ENCODE measurements at regions of chr15 and their contacts with region 1.

Region 1: DNA sequence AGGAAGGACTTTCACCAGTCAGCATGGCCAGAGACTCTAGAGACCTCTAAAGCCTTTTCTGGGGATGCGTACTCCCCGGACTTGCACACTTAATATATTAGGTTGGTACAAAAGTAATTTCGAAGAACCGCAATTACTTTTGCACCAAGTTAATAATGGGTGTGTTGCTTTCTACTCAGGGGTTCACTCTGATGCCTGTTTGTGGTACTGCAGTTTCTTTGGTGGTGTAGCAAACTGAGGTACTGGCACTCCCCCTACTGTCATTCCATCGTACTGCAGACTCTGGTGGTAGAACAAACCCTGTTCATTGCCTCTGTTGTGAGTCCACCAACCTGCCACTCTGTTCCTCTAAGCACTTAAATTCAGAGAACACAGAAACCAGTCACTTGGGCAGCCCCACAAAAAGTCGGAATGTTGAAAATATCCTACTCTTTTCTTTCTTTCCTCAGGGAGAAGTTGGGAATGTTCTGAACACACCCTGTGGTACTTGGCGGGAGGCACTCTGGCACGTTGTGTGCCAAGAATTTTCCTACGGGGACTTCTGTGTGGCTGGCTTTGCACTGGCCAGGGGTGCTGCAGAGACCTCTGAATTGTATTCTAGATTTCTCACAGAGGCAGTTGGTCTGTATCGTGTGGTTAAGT is 46.3 kb downstream of the GABRG3 start:
- DNase-seq: peak; percentile 73
- ATAC-seq: peak; percentile 99
- H3K4me3 ChIP-seq: no peak overlapping the region
- H3K27ac ChIP-seq: no peak overlapping the region
- H3K4me1 ChIP-seq: no peaks in the 10 kb centered on the region
- H3K27me3 ChIP-seq: peaks cover 0 to 2% of the 10 kb centered on the region in 2 experiments; a peak in 1 of 5 replicates
- CTCF ChIP-seq: peak; percentile 83
- EP300 ChIP-seq: no peak
- POLR2A ChIP-seq: no peak
- RAD21 ChIP-seq: peak; percentile 69

Region 2: GRCh38 chr15:26504009-26504408 is 513.3 kb before region 1 on chr15:
- CTCF ChIA-PET with region 1: no interaction called
- POLR2A ChIA-PET with region 1: no interaction called
- in situ Hi-C with region 1: no loop called
- intact Hi-C with region 1: no loop called
- DNase-seq: no peak
- ATAC-seq: no peak
- H3K4me3 ChIP-seq: no peak overlapping the region
- H3K27ac ChIP-seq: no peak overlapping the region
- H3K4me1 ChIP-seq: no peaks in the 10 kb centered on the region
- H3K27me3 ChIP-seq: no peaks in the 10 kb centered on the region
- CTCF ChIP-seq: no peak
- EP300 ChIP-seq: no peak
- POLR2A ChIP-seq: no peak
- RAD21 ChIP-seq: no peak

Region 3: DNA sequence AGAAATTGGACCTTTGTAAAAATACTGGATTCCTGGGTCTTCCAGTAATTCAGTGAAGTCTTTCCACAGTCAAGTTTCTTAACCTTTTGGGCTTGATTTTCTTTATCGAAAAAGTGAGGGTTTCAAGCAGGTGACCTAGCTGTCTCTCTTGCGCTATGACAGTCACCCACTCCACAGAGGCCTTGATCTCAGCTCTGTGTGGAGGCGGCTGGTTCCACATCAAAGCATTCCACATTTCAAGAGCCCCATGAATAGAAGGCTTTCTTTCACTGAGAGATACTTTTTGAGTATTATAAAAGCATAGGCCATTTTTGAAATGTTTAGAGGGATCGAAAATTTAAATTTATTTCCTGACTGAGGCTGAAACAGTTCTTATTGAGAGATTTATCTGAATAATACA is 106.6 kb before region 1 on chr15:
- CTCF ChIA-PET with region 1: no interaction called
- POLR2A ChIA-PET with region 1: no interaction called
- in situ Hi-C with region 1: no loop called
- intact Hi-C with region 1: no loop called
- DNase-seq: peak; percentile 5
- ATAC-seq: no peak
- H3K4me3 ChIP-seq: no peak overlapping the region
- H3K27ac ChIP-seq: no peak overlapping the region
- H3K4me1 ChIP-seq: no peaks in the 10 kb centered on the region
- H3K27me3 ChIP-seq: no peaks in the 10 kb centered on the region
- CTCF ChIP-seq: no peak
- EP300 ChIP-seq: no peak
- POLR2A ChIP-seq: no peak
- RAD21 ChIP-seq: no peak

Region 4: DNA sequence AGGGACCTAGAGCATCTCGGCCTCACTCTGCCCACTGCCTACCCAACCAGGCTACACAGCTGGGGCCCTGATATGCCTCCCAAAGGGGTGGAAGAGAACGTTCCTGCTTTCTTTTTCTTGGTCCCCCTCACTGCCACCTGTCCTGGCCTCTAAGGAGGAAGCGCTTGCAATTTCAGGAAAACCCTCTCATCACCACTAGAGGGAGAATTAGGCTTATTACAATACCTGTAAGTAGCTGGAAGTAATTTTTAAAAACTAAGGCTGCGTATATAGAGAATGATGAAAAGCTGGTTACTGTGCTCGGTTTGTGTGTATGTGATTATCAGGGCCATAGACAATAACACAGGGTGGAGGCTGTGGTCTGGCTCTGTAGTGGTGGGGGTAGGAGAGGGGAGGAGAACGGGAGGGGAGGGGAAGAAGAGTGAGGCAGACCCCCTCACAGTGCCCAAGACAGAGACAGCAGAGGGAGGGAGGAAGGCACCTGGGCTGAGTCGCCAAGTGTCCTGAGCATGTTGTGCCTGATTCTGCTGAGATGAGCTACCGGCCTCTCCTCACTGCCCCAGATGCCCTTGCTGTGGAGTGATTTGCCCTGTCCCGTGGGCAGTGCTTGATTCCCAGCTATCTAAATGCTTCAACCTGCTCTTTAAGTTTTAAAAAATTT is 43.0 kb before region 1 on chr15:
- CTCF ChIA-PET with region 1: interaction called, 3 read pairs
- POLR2A ChIA-PET with region 1: no interaction called
- in situ Hi-C with region 1: no loop called
- intact Hi-C with region 1: loop called (anchors 2 kb)
- DNase-seq: peak; percentile 13
- ATAC-seq: peak; percentile 73
- H3K4me3 ChIP-seq: no peak overlapping the region
- H3K27ac ChIP-seq: no peak overlapping the region
- H3K4me1 ChIP-seq: no peaks in the 10 kb centered on the region
- H3K27me3 ChIP-seq: no peaks in the 10 kb centered on the region; a peak in 1 of 5 replicates
- CTCF ChIP-seq: peak; percentile 38; the same call in 1 of the 2 replicates
- EP300 ChIP-seq: no peak
- POLR2A ChIP-seq: no peak
- RAD21 ChIP-seq: no peak

Measured in HepG2 (cell line).